SK-N-SH (cell line): ENCODE measurements at regions of chr1 and their contacts with region 1.

Region 1: DNA sequence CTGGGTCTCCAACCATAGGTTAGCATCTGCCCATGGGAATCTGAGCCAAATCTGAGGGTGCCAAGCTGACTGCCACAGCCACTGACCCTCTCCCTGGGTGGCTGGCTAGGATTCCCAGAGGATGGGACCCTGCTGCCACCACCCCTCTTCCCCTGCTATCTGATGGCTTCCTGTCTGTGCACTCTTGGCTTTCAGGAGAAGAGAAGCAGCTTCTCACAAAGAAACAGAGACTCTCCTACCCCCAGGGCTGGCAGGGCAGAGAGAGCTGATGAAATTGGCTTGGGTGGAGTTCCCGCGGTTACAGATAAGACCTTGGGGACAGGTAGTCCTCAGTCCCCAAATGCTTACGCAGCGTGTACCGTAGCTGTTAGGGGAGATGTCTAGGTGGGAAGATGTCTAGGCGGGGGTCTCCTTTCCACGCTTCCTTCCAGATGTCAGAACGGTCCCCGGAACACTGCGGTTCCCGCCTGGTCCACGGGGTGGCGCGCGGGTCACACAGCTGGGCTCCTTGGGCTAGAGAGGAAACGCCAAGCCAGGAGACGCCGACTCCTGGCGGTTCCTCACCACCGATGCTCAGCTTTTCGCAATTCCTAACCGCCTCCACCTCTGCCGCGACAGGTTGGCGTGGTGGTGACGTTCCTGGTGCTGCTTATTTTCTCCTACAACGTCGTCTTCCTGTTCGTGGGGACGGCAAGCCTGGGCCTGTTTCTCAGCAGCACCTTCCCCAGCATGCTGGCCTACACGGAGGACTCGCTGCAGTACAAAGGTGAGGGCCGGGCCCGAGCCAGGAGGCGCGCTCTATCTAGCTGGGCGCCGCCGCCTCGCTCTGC is 40.1 kb downstream of the ELK4 start:
- DNase-seq: peak; percentile 87
- H3K4me3 ChIP-seq: peak overlapping the region; percentile 41 to 59
- H3K27ac ChIP-seq: peak overlapping the region in 1 of 2 experiments; percentile 36; a peak in 1 of 4 replicates
- H3K4me1 ChIP-seq: peaks cover 0 to 10% of the 10 kb centered on the region in 2 experiments; a peak in 1 of 4 replicates
- H3K27me3 ChIP-seq: no peaks in the 10 kb centered on the region
- CTCF ChIP-seq: peak; percentile 97
- EP300 ChIP-seq: no peak
- RAD21 ChIP-seq: peak; percentile 95

Region 2: DNA sequence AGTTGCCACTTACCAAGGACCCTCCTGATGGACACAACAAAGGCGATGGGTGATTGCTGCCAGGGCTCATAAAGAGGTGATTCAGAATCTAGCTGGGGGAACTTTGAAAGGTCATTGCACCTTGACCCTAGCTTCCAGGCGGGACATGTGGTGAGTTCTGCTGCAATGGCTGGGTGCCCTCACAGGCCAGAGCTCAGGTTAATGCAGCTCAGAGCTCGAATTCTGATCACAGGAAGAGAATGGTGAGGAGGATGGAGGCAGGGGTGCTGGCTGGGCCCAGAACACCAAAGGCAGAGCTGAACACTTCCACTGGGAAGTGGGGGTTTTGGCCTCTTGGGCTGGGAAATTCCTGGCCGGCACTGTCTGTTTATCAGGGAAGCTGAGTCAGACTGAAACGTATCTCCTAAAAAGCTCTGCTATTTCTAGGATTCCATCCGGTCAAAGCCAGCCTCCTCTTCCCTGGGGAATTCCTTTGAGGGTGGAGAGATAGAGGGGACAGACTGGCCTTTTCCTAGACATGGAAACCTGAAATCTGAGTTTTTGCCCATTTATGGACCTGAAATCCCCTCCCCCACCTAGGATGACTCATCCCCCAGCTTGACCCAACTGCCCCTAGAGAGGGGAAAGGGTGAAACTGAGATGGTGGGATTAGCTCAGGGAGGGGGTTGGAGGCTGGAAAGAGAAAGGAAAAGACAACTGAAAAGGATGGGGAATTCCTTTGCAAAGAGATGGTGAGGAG is 297.4 kb before region 1 on chr1:
- CTCF ChIA-PET with region 1: no interaction called
- POLR2A ChIA-PET with region 1: no interaction called
- DNase-seq: no peak
- H3K4me3 ChIP-seq: no peak overlapping the region
- H3K27ac ChIP-seq: peak overlapping the region; percentile 36 to 95; a peak in 3 of 4 replicates
- H3K4me1 ChIP-seq: peaks cover 2 to 38% of the 10 kb centered on the region in 2 experiments; a peak in 3 of 4 replicates
- H3K27me3 ChIP-seq: no peaks in the 10 kb centered on the region
- CTCF ChIP-seq: no peak
- EP300 ChIP-seq: peak in 1 of 2 experiments; percentile 76; a peak in 1 of 4 replicates
- RAD21 ChIP-seq: no peak

Region 3: DNA sequence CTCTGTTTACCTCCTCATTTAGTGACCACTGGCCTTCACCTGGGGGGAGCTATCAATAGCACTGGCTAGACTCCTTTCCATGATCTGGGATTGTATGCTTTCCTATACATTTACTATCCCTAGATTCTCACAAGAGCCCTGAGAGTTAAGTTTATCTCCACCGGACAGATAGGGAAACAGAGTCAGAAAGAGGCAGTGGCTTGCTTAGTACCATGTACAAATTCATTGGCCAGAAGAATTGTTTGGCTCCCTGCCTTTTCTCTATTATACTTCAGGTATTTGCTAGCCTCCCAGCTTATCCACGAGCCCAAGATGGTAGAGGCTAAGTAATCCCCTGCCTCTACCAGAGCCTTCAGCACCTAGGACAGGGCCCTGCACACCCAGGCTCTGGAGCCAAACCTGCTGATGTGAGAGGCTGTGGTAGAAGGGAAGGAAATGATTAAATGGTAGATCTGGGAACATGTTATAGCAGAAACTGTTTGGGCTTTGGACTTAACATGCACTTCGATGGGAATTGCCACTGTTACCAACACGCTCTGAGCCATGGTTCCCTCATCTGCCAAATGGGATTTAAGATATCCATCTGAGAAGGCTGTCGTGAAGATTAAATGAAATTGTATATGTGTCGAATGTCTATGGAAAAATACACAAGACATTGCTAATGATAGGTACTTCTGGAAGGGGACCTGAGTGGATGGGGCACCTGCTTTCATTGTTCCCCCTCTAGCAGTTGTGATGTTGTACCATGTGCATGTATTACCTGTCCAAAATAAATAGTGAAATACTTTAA is 132.8 kb before region 1 on chr1:
- CTCF ChIA-PET with region 1: no interaction called
- POLR2A ChIA-PET with region 1: no interaction called
- DNase-seq: no peak
- H3K4me3 ChIP-seq: no peak overlapping the region
- H3K27ac ChIP-seq: no peak overlapping the region
- H3K4me1 ChIP-seq: no peaks in the 10 kb centered on the region; a peak in 1 of 4 replicates
- H3K27me3 ChIP-seq: peaks cover 62% of the 10 kb centered on the region
- CTCF ChIP-seq: no peak
- EP300 ChIP-seq: no peak
- RAD21 ChIP-seq: no peak

Region 4: GRCh38 chr1:205528887-205529825 is 62.6 kb before region 1 on chr1:
- CTCF ChIA-PET with region 1: interaction called, 35 read pairs
- POLR2A ChIA-PET with region 1: no interaction called
- DNase-seq: peak; percentile 97
- H3K4me3 ChIP-seq: peak overlapping the region; percentile 40 to 59
- H3K27ac ChIP-seq: no peak overlapping the region
- H3K4me1 ChIP-seq: peaks cover 0 to 21% of the 10 kb centered on the region in 2 experiments; a peak in 1 of 4 replicates
- H3K27me3 ChIP-seq: no peaks in the 10 kb centered on the region
- CTCF ChIP-seq: peak; percentile 90
- EP300 ChIP-seq: no peak
- RAD21 ChIP-seq: peak; percentile 83

Region 5: DNA sequence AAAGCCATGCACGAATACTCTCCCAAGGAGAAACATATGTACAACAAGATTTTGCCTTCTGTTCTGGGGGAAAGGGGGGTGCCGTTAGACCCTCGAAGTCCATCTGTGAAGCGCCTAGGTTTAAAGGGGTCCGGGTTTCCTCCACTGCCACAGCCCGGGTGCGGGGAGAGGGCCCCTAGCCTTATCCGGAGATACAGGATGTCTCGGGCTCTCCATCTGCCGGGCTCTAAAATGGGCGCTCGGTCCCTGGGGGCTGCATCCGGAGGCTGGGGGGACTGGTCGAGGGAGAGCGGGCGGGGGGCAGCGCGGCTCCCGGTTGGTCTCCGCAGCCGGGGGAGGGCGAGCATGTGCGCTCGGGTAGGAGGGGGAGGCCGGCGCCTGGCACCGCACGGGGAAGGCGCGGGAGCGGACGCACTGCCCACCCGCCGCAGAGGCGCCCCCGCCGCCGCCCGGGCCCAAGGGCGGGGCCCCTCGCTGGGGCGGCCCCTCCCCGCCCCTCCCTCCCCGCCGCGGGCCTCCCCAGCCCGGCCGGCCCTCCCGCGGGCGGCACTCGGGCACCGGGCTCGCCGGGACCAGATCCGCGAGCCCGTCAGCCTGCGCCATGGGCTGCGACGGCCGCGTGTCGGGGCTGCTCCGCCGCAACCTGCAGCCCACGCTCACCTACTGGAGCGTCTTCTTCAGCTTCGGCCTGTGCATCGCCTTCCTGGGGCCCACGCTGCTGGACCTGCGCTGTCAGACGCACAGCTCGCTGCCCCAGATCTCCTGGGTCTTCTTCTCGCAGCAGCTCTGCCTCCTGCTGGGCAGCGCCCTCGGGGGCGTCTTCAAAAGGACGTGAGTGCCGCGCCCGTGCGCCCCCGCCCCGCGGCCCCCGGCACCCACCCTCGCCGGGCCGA is 23.0 kb before region 1 on chr1:
- CTCF ChIA-PET with region 1: interaction called, 19 read pairs
- POLR2A ChIA-PET with region 1: no interaction called
- DNase-seq: peak; percentile 77
- H3K4me3 ChIP-seq: peak overlapping the region in 1 of 2 experiments; percentile 27; a peak in 1 of 4 replicates
- H3K27ac ChIP-seq: no peak overlapping the region
- H3K4me1 ChIP-seq: peaks cover 0 to 2% of the 10 kb centered on the region in 2 experiments; a peak in 1 of 4 replicates
- H3K27me3 ChIP-seq: peaks cover 69% of the 10 kb centered on the region
- CTCF ChIP-seq: no peak; the same call in 1 of the 2 replicates
- EP300 ChIP-seq: no peak
- RAD21 ChIP-seq: no peak

Region 6: DNA sequence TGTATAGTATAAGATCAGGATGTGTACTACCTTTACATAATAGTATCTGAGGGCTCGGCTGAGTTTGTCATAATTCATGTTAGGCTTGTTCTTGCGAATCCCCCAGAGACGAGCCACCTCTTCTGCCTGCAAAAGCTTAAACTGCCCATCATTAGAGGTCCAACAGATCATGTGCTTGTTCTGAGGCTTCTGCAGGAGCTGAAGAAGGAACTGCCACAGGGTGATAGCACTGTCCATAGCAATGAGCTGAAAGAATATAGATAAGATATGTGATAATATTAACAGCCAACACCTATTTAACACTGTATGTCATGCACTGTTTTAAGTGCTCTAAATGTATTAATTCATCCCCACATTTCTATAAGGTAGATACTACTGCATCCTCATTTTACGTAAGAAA is 31.9 kb after region 1 on chr1:
- CTCF ChIA-PET with region 1: interaction called, 14 read pairs
- POLR2A ChIA-PET with region 1: no interaction called
- DNase-seq: no peak
- H3K4me3 ChIP-seq: no peak overlapping the region
- H3K27ac ChIP-seq: no peak overlapping the region
- H3K4me1 ChIP-seq: peaks cover 0 to 6% of the 10 kb centered on the region in 2 experiments; a peak in 1 of 4 replicates
- H3K27me3 ChIP-seq: no peaks in the 10 kb centered on the region
- CTCF ChIP-seq: no peak
- EP300 ChIP-seq: no peak
- RAD21 ChIP-seq: no peak

Region 7: DNA sequence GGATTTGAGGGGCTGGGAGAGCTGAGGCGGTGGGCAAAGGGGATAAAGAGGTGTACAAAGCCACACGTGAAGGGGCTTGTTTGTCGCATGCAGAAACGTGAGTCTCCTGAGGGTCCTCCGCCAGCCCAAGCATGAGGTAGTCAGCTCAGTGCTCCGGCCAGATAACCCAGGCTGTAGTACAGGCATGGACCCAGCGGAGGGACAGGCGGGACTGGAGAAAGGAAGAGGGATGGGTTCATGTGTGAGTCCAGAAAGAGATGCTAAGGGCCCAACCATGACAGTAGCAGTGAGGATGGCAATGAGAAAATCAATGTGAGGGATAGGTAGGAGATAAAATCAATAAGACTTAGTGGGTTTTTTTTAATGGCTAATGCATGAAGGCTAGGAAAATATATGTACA is 53.8 kb after region 1 on chr1:
- CTCF ChIA-PET with region 1: interaction called, 16 read pairs
- POLR2A ChIA-PET with region 1: no interaction called
- DNase-seq: no peak
- H3K4me3 ChIP-seq: no peak overlapping the region
- H3K27ac ChIP-seq: no peak overlapping the region
- H3K4me1 ChIP-seq: no peaks in the 10 kb centered on the region; a peak in 1 of 4 replicates
- H3K27me3 ChIP-seq: no peaks in the 10 kb centered on the region
- CTCF ChIP-seq: no peak
- EP300 ChIP-seq: no peak
- RAD21 ChIP-seq: no peak